ENCODE measurements at regions of chr10 and their contacts with region 1.

Region 1: GRCh38 chr10:92873029-92873428 is 24.7 kb downstream of the EXOC6 start:
- DNase-seq: no peak
- ATAC-seq: no peak
- H3K4me3 ChIP-seq: no peak overlapping the region
- H3K27ac ChIP-seq: peak overlapping the region in 1 of 10 donors; percentile 43
- H3K4me1 ChIP-seq: peaks cover 0 to 38% (median 8%) of the 10 kb centered on the region in 9 donors
- H3K27me3 ChIP-seq: no peaks in the 10 kb centered on the region
- CTCF ChIP-seq: no peak

Region 2: DNA sequence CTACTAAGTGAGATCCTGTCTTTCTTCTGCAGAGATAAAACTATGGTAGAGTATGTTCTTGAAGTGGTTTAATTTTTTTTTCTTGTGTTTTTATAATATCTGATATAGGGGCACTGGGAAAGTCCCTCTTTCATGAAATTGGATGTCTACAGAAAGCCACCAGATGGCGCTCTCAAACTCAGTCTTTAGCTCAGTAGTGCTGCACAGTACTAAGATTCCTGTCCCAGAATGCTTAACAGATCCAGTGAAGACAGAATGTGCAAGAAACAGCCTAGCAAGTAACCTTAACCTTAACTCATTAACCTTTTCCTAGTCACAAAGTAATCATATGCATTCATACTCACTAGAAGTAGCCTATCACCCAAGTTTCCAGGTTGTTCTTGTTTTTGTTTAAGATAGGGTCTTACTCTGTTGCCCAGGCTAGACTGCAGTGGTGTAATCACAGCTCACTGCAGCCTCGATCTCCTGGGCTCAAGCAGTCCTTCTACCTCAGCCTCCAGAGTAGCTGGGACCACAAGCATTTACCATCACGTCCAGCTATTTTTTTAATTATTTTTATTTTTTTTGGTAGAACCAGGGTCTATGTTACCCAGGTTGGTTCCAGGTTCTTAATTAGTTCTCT is 355.9 kb before region 1 on chr10:
- intact Hi-C with region 1: loop called in 3 of 10 experiments (anchors 5 to 10 kb)
- DNase-seq: peak in 1 of 2 donors; percentile 68
- ATAC-seq: peak; percentile 65 to 86 (median 82)
- H3K4me3 ChIP-seq: peak overlapping the region in 1 of 10 donors; percentile 5
- H3K27ac ChIP-seq: no peak overlapping the region
- H3K4me1 ChIP-seq: peaks cover 0 to 6% (median 0%) of the 10 kb centered on the region in 9 donors
- H3K27me3 ChIP-seq: no peaks in the 10 kb centered on the region
- CTCF ChIP-seq: peak; percentile 69 to 90 (median 82)

Region 3: GRCh38 chr10:92592761-92593618 is 280.0 kb before region 1 on chr10 and contains the start of gene KIF11:
- intact Hi-C with region 1: loop called in 2 of 10 experiments (anchors 2 to 10 kb)
- DNase-seq: peak; percentile 97
- ATAC-seq: peak; percentile 95 to 97 (median 96)
- H3K4me3 ChIP-seq: peak within 1 kb of the TSS; percentile 54 to 99 (median 71)
- H3K27ac ChIP-seq: peak within 1 kb of the TSS; percentile 76 to 98 (median 94)
- H3K4me1 ChIP-seq: peaks cover 0 to 49% (median 16%) of the 10 kb centered on the region in 9 donors
- H3K27me3 ChIP-seq: no peaks in the 10 kb centered on the region
- CTCF ChIP-seq: peak in 1 of 9 donors; percentile 9
- total RNA-seq, gene KIF11: 0.30 to 4.4 (median 0.84) TPM

Region 4: GRCh38 chr10:92822060-92822634 is 50.9 kb before region 1 on chr10:
- intact Hi-C with region 1: loop called in 2 of 10 experiments (anchors 10 kb)
- DNase-seq: no peak
- ATAC-seq: peak in 7 of 8 donors; percentile 58 to 91 (median 78)
- H3K4me3 ChIP-seq: no peak overlapping the region
- H3K27ac ChIP-seq: peak overlapping the region in 6 of 10 donors; percentile 12 to 74 (median 61)
- H3K4me1 ChIP-seq: peaks cover 0 to 27% (median 10%) of the 10 kb centered on the region in 9 donors
- H3K27me3 ChIP-seq: no peaks in the 10 kb centered on the region
- CTCF ChIP-seq: no peak

Region 5: GRCh38 chr10:92839191-92840085 is 33.6 kb before region 1 on chr10:
- intact Hi-C with region 1: loop called in 3 of 10 experiments (anchors 1 to 5 kb)
- DNase-seq: peak; percentile 71 to 74
- ATAC-seq: peak in 7 of 8 donors; percentile 32 to 80 (median 70)
- H3K4me3 ChIP-seq: no peak overlapping the region
- H3K27ac ChIP-seq: peak overlapping the region in 8 of 10 donors; percentile 26 to 85 (median 58)
- H3K4me1 ChIP-seq: peaks cover 0 to 44% (median 10%) of the 10 kb centered on the region in 9 donors
- H3K27me3 ChIP-seq: no peaks in the 10 kb centered on the region
- CTCF ChIP-seq: peak in 6 of 9 donors; percentile 11 to 55 (median 37)

Region 6: DNA sequence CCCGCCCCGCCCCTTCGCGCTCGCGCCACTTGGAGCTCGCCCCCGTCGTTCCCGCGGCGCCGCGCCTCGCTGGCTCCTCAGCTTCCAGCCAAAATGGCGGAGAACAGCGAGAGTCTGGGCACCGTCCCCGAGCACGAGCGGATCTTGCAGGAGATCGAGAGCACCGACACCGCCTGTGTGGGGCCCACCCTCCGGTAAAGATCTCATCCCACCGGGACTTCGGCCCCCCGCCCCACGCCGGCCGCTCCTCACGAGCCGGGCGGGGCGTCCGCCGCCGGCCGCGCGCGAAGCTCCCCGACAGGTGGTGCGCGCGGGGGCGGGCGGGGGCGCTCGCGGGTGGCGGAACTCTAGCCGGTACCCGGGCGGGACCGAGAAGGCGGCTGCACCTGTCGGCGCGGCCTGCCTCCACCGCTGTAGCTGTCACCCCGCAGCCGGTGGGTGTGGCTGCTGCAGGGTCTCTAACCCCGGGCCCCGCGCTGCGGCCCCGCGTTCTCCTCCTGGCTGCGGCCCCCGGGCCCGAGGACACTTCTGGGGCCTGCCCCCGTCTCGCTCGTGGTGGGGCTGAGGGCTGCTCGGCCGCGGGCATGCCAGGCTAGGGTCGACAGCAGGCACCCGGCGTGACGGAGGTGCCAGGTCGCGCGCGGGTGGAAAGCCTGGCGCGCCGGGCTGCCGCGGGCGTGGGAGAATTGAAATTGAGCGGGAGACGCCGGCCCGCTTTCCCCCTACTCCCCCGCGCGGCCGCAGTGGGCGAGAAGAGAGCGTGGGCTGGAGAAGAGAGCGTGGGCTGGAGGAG is 24.4 kb before region 1 on chr10 and contains the start of gene EXOC6:
- intact Hi-C with region 1: loop called in 3 of 10 experiments (anchors 1 to 5 kb)
- DNase-seq: peak; percentile 84 to 85
- ATAC-seq: peak; percentile 84 to 95 (median 92)
- H3K4me3 ChIP-seq: peak within 1 kb of the TSS; percentile 70 to 100 (median 96)
- H3K27ac ChIP-seq: peak within 1 kb of the TSS; percentile 73 to 94 (median 92)
- H3K4me1 ChIP-seq: peaks cover 0 to 38% (median 10%) of the 10 kb centered on the region in 9 donors
- H3K27me3 ChIP-seq: no peaks in the 10 kb centered on the region
- CTCF ChIP-seq: peak in 5 of 9 donors; percentile 2 to 20 (median 14)
- total RNA-seq, gene EXOC6: 8.7 to 11.7 (median 9.5) TPM